HepG2 (cell line): ENCODE measurements at regions of chr17 and their contacts with region 1.

Region 1: GRCh38 chr17:7329374-7329996 is 350 bp upstream of the NEURL4 start:
- DNase-seq: peak; percentile 97
- ATAC-seq: peak; percentile 81
- H3K4me3 ChIP-seq: peak overlapping the region; percentile 90 to 97 (median 91)
- H3K27ac ChIP-seq: peak overlapping the region; percentile 63
- H3K4me1 ChIP-seq: peaks cover 26% of the 10 kb centered on the region
- H3K27me3 ChIP-seq: peaks cover 0 to 4% of the 10 kb centered on the region in 2 experiments; a peak in 2 of 5 replicates
- CTCF ChIP-seq: 0 out of 2 replicates have a peak, but pooled peaks have one; percentile 35
- EP300 ChIP-seq: no peak; a peak in 1 of 4 replicates
- POLR2A ChIP-seq: peak; percentile 68 to 85
- RAD21 ChIP-seq: no peak

Region 2: GRCh38 chr17:7296189-7296902 is 33.1 kb before region 1 on chr17:
- CTCF ChIA-PET with region 1: no interaction called
- POLR2A ChIA-PET with region 1: interaction called, 4 read pairs
- in situ Hi-C with region 1: no loop called
- intact Hi-C with region 1: loop called (anchors 1 kb)
- DNase-seq: peak; percentile 56
- ATAC-seq: peak; percentile 63
- H3K4me3 ChIP-seq: peak overlapping the region in 1 of 3 experiments; percentile 50; a peak in 2 of 6 replicates
- H3K27ac ChIP-seq: no peak overlapping the region
- H3K4me1 ChIP-seq: peaks cover 41% of the 10 kb centered on the region
- H3K27me3 ChIP-seq: peaks cover 2 to 11% of the 10 kb centered on the region in 2 experiments; a peak in 2 of 5 replicates
- CTCF ChIP-seq: peak; percentile 93
- EP300 ChIP-seq: no peak
- POLR2A ChIP-seq: no peak
- RAD21 ChIP-seq: peak; percentile 99

Region 3: GRCh38 chr17:7308625-7309433 is 20.7 kb before region 1 on chr17:
- CTCF ChIA-PET with region 1: no interaction called
- POLR2A ChIA-PET with region 1: interaction called, 47 read pairs
- in situ Hi-C with region 1: no loop called
- intact Hi-C with region 1: no loop called
- DNase-seq: peak; percentile 79
- ATAC-seq: peak; percentile 40
- H3K4me3 ChIP-seq: peak overlapping the region; percentile 64 to 84 (median 77)
- H3K27ac ChIP-seq: peak overlapping the region; percentile 96
- H3K4me1 ChIP-seq: peaks cover 55% of the 10 kb centered on the region
- H3K27me3 ChIP-seq: no peaks in the 10 kb centered on the region
- CTCF ChIP-seq: no peak
- EP300 ChIP-seq: no peak
- POLR2A ChIP-seq: peak; percentile 37 to 69; a peak in 3 of 4 replicates
- RAD21 ChIP-seq: no peak

Region 4: GRCh38 chr17:7314719-7315569 is 14.5 kb before region 1 on chr17 and contains the start of gene GPS2:
- CTCF ChIA-PET with region 1: no interaction called
- POLR2A ChIA-PET with region 1: interaction called, 47 read pairs
- in situ Hi-C with region 1: no loop called
- intact Hi-C with region 1: no loop called
- DNase-seq: peak; percentile 81
- ATAC-seq: peak; percentile 75
- H3K4me3 ChIP-seq: peak within 1 kb of the TSS; percentile 82 to 89 (median 82)
- H3K27ac ChIP-seq: peak within 1 kb of the TSS; percentile 60
- H3K4me1 ChIP-seq: peaks cover 40% of the 10 kb centered on the region
- H3K27me3 ChIP-seq: no peaks in the 10 kb centered on the region
- CTCF ChIP-seq: peak; percentile 26
- EP300 ChIP-seq: no peak
- POLR2A ChIP-seq: peak; percentile 69 to 93
- RAD21 ChIP-seq: peak; percentile 35; the same call in 1 of the 2 replicates
- total RNA-seq, gene GPS2: 43.8 and 58.0 TPM in 2 replicates

Region 5: GRCh38 chr17:7344399-7344798 is 14.9 kb after region 1 on chr17:
- CTCF ChIA-PET with region 1: interaction called, 41 read pairs
- POLR2A ChIA-PET with region 1: interaction called, 25 read pairs
- in situ Hi-C with region 1: no loop called
- intact Hi-C with region 1: loop called (anchors 1 kb)
- DNase-seq: no peak
- ATAC-seq: no peak
- H3K4me3 ChIP-seq: no peak overlapping the region
- H3K27ac ChIP-seq: no peak overlapping the region
- H3K4me1 ChIP-seq: peaks cover 48% of the 10 kb centered on the region
- H3K27me3 ChIP-seq: peaks cover 3 to 26% of the 10 kb centered on the region in 2 experiments; a peak in 3 of 5 replicates
- CTCF ChIP-seq: no peak
- EP300 ChIP-seq: no peak
- POLR2A ChIP-seq: no peak
- RAD21 ChIP-seq: no peak

Region 6: DNA sequence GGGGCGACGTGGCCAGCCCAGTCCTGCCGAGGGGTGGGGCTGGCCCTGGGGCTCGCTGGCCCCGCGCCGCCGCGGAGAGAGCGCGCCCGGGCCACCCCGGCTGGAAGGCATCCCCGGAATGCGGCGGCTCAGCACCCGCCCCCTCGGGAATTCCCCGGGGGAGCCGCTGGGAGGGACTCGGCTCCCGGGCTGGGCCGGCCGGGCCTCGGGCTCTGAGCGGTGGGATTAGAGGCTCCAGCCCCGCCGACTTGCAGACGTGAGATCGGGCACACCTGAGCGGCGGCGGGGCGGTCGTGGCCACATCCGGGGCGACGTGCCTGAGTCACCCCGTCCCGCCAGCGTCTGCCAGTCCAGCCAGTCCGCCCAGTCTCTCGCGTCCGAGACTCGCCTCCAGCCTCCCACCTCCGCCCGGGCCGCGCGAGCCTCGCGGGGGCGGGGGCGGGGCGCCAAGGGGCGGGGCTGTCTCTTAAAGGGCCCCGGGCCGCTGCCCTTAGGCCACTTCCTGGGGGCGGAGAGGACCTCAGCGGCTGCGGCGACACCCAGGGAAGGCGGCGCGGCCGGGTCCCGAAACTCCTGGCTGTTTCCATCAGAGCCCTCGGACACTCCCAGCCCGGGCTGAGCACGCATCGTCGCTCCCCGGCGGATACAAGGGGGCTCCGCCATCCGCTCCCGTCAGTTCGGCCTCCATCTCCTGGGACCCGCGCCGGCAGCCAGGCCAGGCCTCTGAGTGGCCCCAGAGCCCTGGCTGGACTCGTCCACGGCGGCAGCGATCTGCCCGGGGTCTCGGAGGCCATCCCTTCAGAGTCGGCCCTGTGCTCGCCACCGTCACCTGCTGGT is 22.4 kb after region 1 on chr17 and contains the start of gene KCTD11:
- CTCF ChIA-PET with region 1: interaction called, 41 read pairs
- POLR2A ChIA-PET with region 1: interaction called, 14 read pairs
- in situ Hi-C with region 1: no loop called
- intact Hi-C with region 1: loop called (anchors 2 kb)
- DNase-seq: peak; percentile 73
- ATAC-seq: peak; percentile 76
- H3K4me3 ChIP-seq: peak within 1 kb of the TSS; percentile 64 to 88 (median 87)
- H3K27ac ChIP-seq: peak within 1 kb of the TSS; percentile 95
- H3K4me1 ChIP-seq: peaks cover 55% of the 10 kb centered on the region
- H3K27me3 ChIP-seq: peaks cover 0 to 5% of the 10 kb centered on the region in 2 experiments; a peak in 2 of 5 replicates
- CTCF ChIP-seq: peak; percentile 66
- EP300 ChIP-seq: no peak
- POLR2A ChIP-seq: peak in 1 of 2 experiments; percentile 84; a peak in 3 of 4 replicates
- RAD21 ChIP-seq: peak; percentile 58; the same call in 1 of the 2 replicates
- total RNA-seq, gene KCTD11: 1.3 and 1.6 TPM in 2 replicates

Region 7: GRCh38 chr17:7444682-7445618 is 115.5 kb after region 1 on chr17 and contains the start of gene CHRNB1:
- CTCF ChIA-PET with region 1: no interaction called
- POLR2A ChIA-PET with region 1: interaction called, 4 read pairs
- in situ Hi-C with region 1: no loop called
- intact Hi-C with region 1: loop called (anchors 1 kb)
- DNase-seq: peak; percentile 85
- ATAC-seq: peak; percentile 87
- H3K4me3 ChIP-seq: peak within 1 kb of the TSS; percentile 62 to 85 (median 63)
- H3K27ac ChIP-seq: peak within 1 kb of the TSS; percentile 73
- H3K4me1 ChIP-seq: peaks cover 50% of the 10 kb centered on the region
- H3K27me3 ChIP-seq: peaks cover 6 to 27% of the 10 kb centered on the region in 2 experiments; a peak in 4 of 5 replicates
- CTCF ChIP-seq: peak; percentile 69
- EP300 ChIP-seq: 0 out of 4 replicates have a peak, but pooled peaks of 1 of the 2 experiments have one; percentile 3
- POLR2A ChIP-seq: peak in 1 of 2 experiments; percentile 76; a peak in 2 of 4 replicates
- RAD21 ChIP-seq: peak; percentile 43; the same call in 1 of the 2 replicates
- total RNA-seq, gene CHRNB1: 3.6 and 5.4 TPM in 2 replicates